Astrocyte of the cerebellum (primary cell): ENCODE measurements at regions of chr10 and their contacts with region 1.

Region 1: DNA sequence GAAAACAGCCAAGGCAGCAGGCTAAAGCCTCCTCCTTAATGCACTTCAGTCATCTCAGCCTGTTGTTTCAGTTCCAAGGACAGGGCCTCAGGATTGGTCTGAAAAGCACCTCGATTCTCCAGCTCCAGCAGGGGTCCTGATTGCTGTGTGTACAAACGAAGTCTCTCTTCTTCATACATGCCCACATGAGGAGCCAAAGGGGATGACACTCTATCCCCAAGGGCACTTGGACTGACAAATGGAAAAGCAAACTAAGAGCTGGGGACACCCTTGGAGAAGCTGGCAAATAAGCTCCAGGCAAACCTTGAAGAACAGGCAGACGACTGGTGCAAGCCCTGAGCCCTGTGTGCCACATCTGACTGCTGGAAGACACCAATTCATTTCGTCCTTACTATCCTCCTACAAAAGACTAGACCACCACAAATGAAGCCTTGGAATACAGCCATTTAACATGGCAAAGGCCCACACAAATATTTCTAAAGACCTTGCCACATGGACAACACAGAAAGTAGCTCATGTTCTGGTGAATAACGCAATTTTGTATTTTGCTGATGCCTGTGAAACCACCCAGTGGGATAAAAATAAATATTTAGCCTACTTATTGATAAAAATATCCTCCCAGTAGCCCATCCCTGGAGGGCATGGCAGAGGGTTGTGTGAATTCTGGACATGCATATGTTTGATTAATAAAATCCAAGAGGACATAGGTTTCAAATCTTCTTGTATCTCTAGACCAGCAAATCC is 61.9 kb downstream of the PARD3 start:
- DNase-seq: no peak
- H3K4me3 ChIP-seq: no peak overlapping the region
- CTCF ChIP-seq: no peak

Region 2: DNA sequence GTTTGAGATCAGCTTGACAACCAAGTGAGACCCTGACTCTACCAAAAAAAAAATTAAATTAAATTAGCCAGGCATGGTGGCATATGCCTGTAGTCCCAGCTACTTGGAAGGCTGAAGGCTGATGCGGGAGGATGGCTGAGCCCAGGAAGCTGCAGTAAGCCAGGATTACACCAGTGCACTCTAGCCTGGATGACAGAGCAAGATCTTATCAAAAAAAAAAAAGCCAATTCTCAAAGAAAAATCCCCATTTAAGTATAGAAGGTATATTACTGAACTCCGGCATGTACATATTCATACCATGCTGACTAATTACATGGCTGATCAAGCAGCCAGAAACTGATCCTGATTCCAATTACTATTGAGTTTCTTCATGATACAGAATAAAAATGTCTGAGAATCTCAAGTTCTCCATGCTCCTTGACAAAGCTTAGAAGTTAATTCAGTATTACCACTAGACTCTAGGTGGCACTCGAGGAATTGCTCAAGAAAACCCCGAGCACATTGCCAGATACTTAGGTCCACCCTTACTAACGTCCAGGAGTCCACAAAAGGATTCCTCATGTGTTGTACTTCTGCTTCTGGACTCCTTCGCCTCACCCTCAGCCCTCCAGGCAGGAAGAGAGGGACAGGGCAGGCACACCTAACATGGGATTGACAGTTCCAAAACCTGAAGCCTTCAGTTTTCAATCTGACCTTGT is 87.0 kb before region 1 on chr10:
- in situ Hi-C with region 1: loop called (anchors 5 kb)
- DNase-seq: peak; percentile 92
- H3K4me3 ChIP-seq: no peak overlapping the region
- CTCF ChIP-seq: peak; percentile 65